ENCODE measurements at regions of chr7 and their contacts with region 1.

Region 1: DNA sequence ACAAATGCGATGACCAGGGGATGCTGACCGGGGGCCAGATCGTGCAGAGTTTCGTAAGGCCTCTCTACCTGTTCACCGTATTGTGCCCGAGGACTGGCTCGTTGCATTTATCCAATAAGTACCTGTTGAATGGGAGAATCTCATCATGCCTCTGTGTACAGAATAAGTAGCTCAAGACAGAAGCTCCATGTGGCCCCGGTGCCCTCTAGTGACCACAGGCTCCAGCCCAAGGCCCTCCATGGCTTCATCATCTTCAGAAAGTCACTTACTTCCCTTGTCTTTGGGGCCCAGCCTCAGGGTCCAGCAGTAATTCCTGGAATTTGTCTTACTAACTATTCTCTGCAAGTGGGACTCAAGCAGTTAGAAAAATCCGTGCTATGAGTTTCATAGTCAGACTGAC is 151.0 kb downstream of the CHN2 start:
- DNase-seq: peak; percentile 39 to 91 (median 72)
- H3K4me3 ChIP-seq: no peak overlapping the region
- H3K27ac ChIP-seq: peak overlapping the region in 27 of 59 donors; percentile 4 to 78 (median 53)
- H3K27me3 ChIP-seq: no peaks in the 10 kb centered on the region
- CTCF ChIP-seq: peak; percentile 26 to 86 (median 66)

Region 2: GRCh38 chr7:28921822-28922221 is 423.8 kb before region 1 on chr7:
- intact Hi-C with region 1: loop called in 1 of 2 experiments (anchors 2 kb)
- DNase-seq: peak in 6 of 10 donors; percentile 40 to 74 (median 56)
- H3K4me3 ChIP-seq: peak overlapping the region in 32 of 59 donors; percentile 0 to 47 (median 26)
- H3K27ac ChIP-seq: peak overlapping the region in 1 of 59 donors; percentile 27
- H3K27me3 ChIP-seq: no peaks in the 10 kb centered on the region
- CTCF ChIP-seq: peak; percentile 83 to 99 (median 93)

Region 3: GRCh38 chr7:29105752-29106668 is 239.6 kb before region 1 on chr7:
- intact Hi-C with region 1: loop called in 1 of 2 experiments (anchors 10 kb)
- DNase-seq: peak in 2 of 10 donors; percentile 34
- H3K4me3 ChIP-seq: no peak overlapping the region
- H3K27ac ChIP-seq: no peak overlapping the region
- H3K27me3 ChIP-seq: peaks cover 0 to 9% (median 0%) of the 10 kb centered on the region in 45 donors
- CTCF ChIP-seq: peak; percentile 56 to 89 (median 80)

Region 4: DNA sequence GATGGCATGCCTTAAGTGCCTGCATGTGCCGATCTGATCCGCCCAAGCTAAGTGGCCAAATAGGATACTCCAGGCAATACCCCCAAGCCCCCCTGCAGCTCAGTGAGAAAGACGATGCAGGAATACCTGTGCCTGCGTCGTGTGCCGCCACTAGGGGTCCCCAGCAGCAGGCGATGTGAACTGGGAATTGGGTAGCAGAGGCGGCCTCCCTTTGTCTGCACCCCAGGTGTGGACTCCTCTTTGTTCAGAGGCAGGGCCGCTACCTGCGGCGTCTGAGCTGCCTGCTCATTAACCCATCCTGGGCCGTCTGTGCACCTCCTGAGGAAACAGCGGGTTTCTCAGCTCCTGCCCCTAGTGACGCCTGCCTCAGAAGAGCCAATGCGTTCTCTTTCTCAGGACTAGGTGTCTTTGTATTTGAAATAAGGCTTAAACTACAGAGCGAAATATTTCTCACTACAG is 155.8 kb before region 1 on chr7:
- intact Hi-C with region 1: loop called (anchors 2 to 5 kb)
- DNase-seq: peak; percentile 58 to 82 (median 72)
- H3K4me3 ChIP-seq: peak overlapping the region in 56 of 59 donors; percentile 3 to 57 (median 38)
- H3K27ac ChIP-seq: peak overlapping the region in 20 of 59 donors; percentile 4 to 97 (median 38)
- H3K27me3 ChIP-seq: peaks cover 0 to 10% (median 0%) of the 10 kb centered on the region in 45 donors
- CTCF ChIP-seq: peak; percentile 65 to 93 (median 84)

Region 5: GRCh38 chr7:29274146-29275017 is 71.2 kb before region 1 on chr7:
- intact Hi-C with region 1: loop called in 1 of 2 experiments (anchors 5 kb)
- DNase-seq: peak in 5 of 10 donors; percentile 46 to 70 (median 51)
- H3K4me3 ChIP-seq: peak overlapping the region in 56 of 59 donors; percentile 1 to 65 (median 40)
- H3K27ac ChIP-seq: peak overlapping the region in 58 of 59 donors; percentile 22 to 94 (median 84)
- H3K27me3 ChIP-seq: no peaks in the 10 kb centered on the region
- CTCF ChIP-seq: peak in 1 of 56 donors; percentile 13

Region 6: GRCh38 chr7:29408841-29409243 is 63.2 kb after region 1 on chr7:
- intact Hi-C with region 1: loop called (anchors 5 to 10 kb)
- DNase-seq: peak in 4 of 10 donors; percentile 24 to 83 (median 59)
- H3K4me3 ChIP-seq: no peak overlapping the region
- H3K27ac ChIP-seq: no peak overlapping the region
- H3K27me3 ChIP-seq: no peaks in the 10 kb centered on the region
- CTCF ChIP-seq: peak; percentile 84 to 99 (median 93)

Region 7: GRCh38 chr7:29488977-29489376 is 143.4 kb after region 1 on chr7:
- intact Hi-C with region 1: loop called in 1 of 2 experiments (anchors 10 kb)
- DNase-seq: no peak
- H3K4me3 ChIP-seq: peak overlapping the region in 22 of 59 donors; percentile 0 to 63 (median 9)
- H3K27ac ChIP-seq: peak overlapping the region; percentile 14 to 100 (median 97)
- H3K27me3 ChIP-seq: no peaks in the 10 kb centered on the region
- CTCF ChIP-seq: no peak